Ovary (tissue), 10 donors: ENCODE measurements at regions of chr13 and their contacts with region 1.

Region 1: DNA sequence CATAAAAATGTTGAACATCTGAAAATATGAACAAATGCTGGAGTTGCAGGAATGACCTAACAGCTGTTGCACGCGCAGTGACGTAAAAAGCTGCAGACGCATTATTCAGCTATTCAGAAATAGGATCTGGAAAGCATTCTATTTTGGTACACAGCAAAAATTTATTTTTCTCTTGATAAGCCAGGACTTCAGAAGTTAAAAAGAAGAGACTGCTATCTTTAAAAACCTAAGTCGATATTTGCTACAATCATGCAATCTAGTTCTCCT is 36.9 kb upstream of the STARD13 start:
- DNase-seq: peak; percentile 45 to 71 (median 53)
- H3K4me3 ChIP-seq: peak overlapping the region; percentile 15
- H3K27ac ChIP-seq: no peak overlapping the region
- H3K4me1 ChIP-seq: peaks cover 2% of the 10 kb centered on the region
- H3K27me3 ChIP-seq: no peaks in the 10 kb centered on the region
- CTCF ChIP-seq: no peak
- EP300 ChIP-seq: no peak
- POLR2A ChIP-seq: no peak

Region 2: GRCh38 chr13:33260168-33261098 is 62.0 kb before region 1 on chr13:
- intact Hi-C with region 1: loop called in 1 of 4 experiments (anchors 1 kb)
- DNase-seq: no peak
- H3K4me3 ChIP-seq: no peak overlapping the region
- H3K27ac ChIP-seq: no peak overlapping the region
- H3K4me1 ChIP-seq: peaks cover 16% of the 10 kb centered on the region
- H3K27me3 ChIP-seq: no peaks in the 10 kb centered on the region
- CTCF ChIP-seq: no peak
- EP300 ChIP-seq: no peak
- POLR2A ChIP-seq: no peak